Psoas muscle (tissue), 8 donors: ENCODE measurements at regions of chr18 and their contacts with region 1.

Region 1: GRCh38 chr18:76803814-76804213 is 18.5 kb upstream of the ZNF236 start:
- DNase-seq: peak in 1 of 2 donors; percentile 47
- ATAC-seq: peak; percentile 55 to 81 (median 77)
- H3K4me3 ChIP-seq: no peak overlapping the region
- H3K27ac ChIP-seq: no peak overlapping the region
- H3K4me1 ChIP-seq: peaks cover 3% of the 10 kb centered on the region
- H3K27me3 ChIP-seq: peaks cover 0 to 4% (median 0%) of the 10 kb centered on the region in 3 donors
- CTCF ChIP-seq: peak; percentile 73

Region 2: GRCh38 chr18:76874642-76875389 is 71.0 kb after region 1 on chr18:
- intact Hi-C with region 1: loop called (anchors 5 kb)
- DNase-seq: no peak
- ATAC-seq: peak in 2 of 4 donors; percentile 8 to 13
- H3K4me3 ChIP-seq: no peak overlapping the region
- H3K27ac ChIP-seq: no peak overlapping the region
- H3K4me1 ChIP-seq: no peaks in the 10 kb centered on the region
- H3K27me3 ChIP-seq: no peaks in the 10 kb centered on the region
- CTCF ChIP-seq: no peak

Region 3: DNA sequence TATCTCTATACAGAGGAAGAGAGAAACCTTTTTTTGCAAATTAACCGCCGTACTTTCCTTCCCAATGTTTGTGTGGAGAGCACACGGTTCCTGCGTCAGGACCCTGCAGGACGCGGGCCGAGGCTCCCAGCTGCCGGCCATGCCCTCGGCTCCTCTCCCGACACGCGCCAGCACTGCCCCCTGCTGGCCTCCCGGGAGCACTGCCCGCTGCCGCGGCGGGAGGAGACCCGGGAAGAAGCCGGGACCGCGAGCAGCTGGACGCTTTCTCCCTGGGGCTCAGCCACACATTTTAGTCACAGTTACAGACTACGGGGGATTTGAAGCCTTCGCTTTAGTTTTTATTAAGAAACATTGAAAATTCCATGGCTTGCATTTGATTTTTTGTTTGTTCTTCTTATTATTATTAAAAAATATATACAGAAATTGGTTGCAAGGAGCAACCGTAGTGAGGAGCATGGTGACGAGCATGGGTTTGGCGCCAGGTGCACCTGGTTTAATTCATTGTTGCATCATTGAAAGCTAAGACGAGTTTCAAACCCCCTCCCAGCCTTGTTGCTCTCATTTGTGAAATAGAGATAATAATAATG is 847.1 kb after region 1 on chr18:
- intact Hi-C with region 1: loop called in 1 of 2 experiments (anchors 5 kb)
- DNase-seq: peak; percentile 73 to 85
- ATAC-seq: peak; percentile 48 to 71 (median 63)
- H3K4me3 ChIP-seq: no peak overlapping the region
- H3K27ac ChIP-seq: no peak overlapping the region
- H3K4me1 ChIP-seq: no peaks in the 10 kb centered on the region
- H3K27me3 ChIP-seq: no peaks in the 10 kb centered on the region
- CTCF ChIP-seq: peak; percentile 74